ENCODE measurements at regions of chr19 and their contacts with region 1.

Region 1: GRCh38 chr19:56667311-56667870 is 4.2 kb downstream of the ZNF835 start:
- DNase-seq: no peak
- H3K4me3 ChIP-seq: no peak overlapping the region
- H3K27ac ChIP-seq: no peak overlapping the region
- H3K27me3 ChIP-seq: no peaks in the 10 kb centered on the region
- CTCF ChIP-seq: no peak

Region 2: GRCh38 chr19:56594783-56595547 is 72.4 kb before region 1 on chr19 and contains the start of gene ZNF71:
- intact Hi-C with region 1: loop called in 1 of 2 experiments (anchors 5 kb)
- DNase-seq: peak; percentile 71 to 94 (median 86)
- H3K4me3 ChIP-seq: peak within 1 kb of the TSS; percentile 51 to 99 (median 95)
- H3K27ac ChIP-seq: peak within 1 kb of the TSS in 52 of 59 donors; percentile 27 to 90 (median 71)
- H3K27me3 ChIP-seq: no peaks in the 10 kb centered on the region
- CTCF ChIP-seq: peak in 21 of 56 donors; percentile 9 to 45 (median 29)
- total RNA-seq, gene ZNF71: 10.6 to 21.2 (median 15.5) TPM

Measured in dorsolateral prefrontal cortex (tissue), 120 donors.